ENCODE measurements at regions of chr3 and their contacts with region 1.

Region 1: DNA sequence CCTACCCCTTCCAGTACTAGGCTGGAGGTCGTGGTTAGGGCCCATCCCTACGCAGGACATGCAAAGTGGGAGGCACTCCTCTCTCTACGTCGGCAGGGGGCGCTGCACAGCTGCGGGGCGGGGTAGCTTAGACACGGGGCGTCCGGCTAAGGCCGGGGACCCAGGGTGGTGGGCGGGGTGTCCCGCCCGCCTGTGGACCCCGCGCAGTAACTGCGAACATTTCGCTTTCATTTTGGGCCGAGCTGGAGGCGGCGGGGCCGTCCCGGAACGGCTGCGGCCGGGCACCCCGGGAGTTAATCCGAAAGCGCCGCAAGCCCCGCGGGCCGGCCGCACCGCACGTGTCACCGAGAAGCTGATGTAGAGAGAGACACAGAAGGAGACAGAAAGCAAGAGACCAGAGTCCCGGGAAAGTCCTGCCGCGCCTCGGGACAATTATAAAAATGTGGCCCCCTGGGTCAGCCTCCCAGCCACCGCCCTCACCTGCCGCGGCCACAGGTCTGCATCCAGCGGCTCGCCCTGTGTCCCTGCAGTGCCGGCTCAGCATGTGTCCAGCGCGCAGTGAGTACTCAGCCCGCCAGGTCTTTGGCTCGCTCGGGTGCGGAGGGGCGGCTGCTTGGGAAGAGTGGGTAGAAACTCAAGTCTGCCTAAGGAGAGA is at the start of gene IL12A:
- DNase-seq: peak; percentile 90
- ATAC-seq: peak; percentile 94
- H3K4me3 Mint-ChIP-seq: peak within 1 kb of the TSS; percentile 90
- H3K27ac Mint-ChIP-seq: peak within 1 kb of the TSS; percentile 80
- H3K4me1 Mint-ChIP-seq: peaks cover 53% of the 10 kb centered on the region
- H3K27me3 Mint-ChIP-seq: no peaks in the 10 kb centered on the region
- CTCF ChIP-seq: peak; percentile 90
- total RNA-seq, gene IL12A: 7.0 and 7.8 TPM in 2 replicates

Region 2: GRCh38 chr3:159902546-159903314 is 86.0 kb before region 1 on chr3:
- CTCF ChIA-PET with region 1: interaction called, 3 read pairs
- POLR2A ChIA-PET with region 1: interaction called, 3 read pairs
- intact Hi-C with region 1: loop called (anchors 1 kb)
- DNase-seq: no peak
- ATAC-seq: peak; percentile 59
- H3K4me3 Mint-ChIP-seq: no peak overlapping the region
- H3K27ac Mint-ChIP-seq: peak overlapping the region; percentile 63
- H3K4me1 Mint-ChIP-seq: peaks cover 25% of the 10 kb centered on the region
- H3K27me3 Mint-ChIP-seq: no peaks in the 10 kb centered on the region
- CTCF ChIP-seq: no peak

Region 3: GRCh38 chr3:159977295-159977694 is 11.4 kb before region 1 on chr3:
- CTCF ChIA-PET with region 1: interaction called, 5 read pairs
- POLR2A ChIA-PET with region 1: no interaction called
- intact Hi-C with region 1: loop called (anchors 1 kb)
- DNase-seq: no peak
- ATAC-seq: no peak
- H3K4me3 Mint-ChIP-seq: no peak overlapping the region
- H3K27ac Mint-ChIP-seq: no peak overlapping the region
- H3K4me1 Mint-ChIP-seq: no peaks in the 10 kb centered on the region
- H3K27me3 Mint-ChIP-seq: peaks cover 8% of the 10 kb centered on the region
- CTCF ChIP-seq: no peak

Region 4: DNA sequence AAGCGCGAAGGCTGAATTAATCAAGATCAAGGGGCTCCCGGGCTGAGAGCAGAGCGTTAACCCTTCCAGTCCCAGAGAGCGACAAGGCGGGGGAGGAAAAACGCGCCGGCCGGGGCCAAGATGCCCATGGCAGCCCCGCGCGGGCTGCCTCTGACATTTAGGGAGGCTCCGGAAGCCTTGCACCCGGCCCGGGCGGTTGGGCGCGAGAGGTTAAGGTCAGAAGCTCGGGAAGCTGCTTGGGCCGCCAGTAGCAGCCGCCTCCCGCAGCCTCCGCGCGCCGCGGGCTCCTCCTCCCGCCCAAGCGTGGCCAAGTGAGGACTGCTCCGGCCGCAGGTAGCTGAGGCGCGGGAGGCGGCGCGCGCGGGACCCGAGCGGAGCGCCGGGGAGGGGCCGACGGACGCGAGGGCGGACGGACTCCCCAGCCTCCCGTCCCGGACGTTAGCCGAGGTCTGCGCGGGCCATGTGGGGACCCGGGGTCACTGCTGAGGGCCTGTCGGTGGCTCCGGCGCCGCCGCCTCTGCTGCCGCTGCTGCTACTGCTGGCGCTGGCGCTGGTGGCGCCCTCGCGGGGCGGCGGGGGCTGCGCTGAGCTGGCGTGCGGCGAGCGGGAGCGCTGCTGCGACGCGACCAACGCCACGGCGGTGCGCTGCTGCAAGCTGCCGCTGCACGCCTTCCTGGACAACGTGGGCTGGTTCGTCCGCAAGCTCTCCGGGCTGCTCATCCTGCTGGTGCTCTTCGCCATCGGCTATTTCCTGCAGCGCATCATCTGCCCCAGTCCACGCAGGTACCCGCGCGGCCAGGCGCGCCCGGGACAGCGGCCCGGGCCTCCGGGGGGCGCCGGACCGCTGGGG is 236.7 kb after region 1 on chr3 and contains the start of gene C3orf80:
- CTCF ChIA-PET with region 1: no interaction called
- POLR2A ChIA-PET with region 1: no interaction called
- intact Hi-C with region 1: loop called (anchors 2 kb)
- DNase-seq: peak; percentile 41
- ATAC-seq: peak; percentile 78
- H3K4me3 Mint-ChIP-seq: peak within 1 kb of the TSS; percentile 71
- H3K27ac Mint-ChIP-seq: no peak within 1 kb of the TSS
- H3K4me1 Mint-ChIP-seq: peaks cover 21% of the 10 kb centered on the region
- H3K27me3 Mint-ChIP-seq: peaks cover 37% of the 10 kb centered on the region
- CTCF ChIP-seq: no peak
- total RNA-seq, gene C3orf80: not detected in 2 replicates

Region 5: DNA sequence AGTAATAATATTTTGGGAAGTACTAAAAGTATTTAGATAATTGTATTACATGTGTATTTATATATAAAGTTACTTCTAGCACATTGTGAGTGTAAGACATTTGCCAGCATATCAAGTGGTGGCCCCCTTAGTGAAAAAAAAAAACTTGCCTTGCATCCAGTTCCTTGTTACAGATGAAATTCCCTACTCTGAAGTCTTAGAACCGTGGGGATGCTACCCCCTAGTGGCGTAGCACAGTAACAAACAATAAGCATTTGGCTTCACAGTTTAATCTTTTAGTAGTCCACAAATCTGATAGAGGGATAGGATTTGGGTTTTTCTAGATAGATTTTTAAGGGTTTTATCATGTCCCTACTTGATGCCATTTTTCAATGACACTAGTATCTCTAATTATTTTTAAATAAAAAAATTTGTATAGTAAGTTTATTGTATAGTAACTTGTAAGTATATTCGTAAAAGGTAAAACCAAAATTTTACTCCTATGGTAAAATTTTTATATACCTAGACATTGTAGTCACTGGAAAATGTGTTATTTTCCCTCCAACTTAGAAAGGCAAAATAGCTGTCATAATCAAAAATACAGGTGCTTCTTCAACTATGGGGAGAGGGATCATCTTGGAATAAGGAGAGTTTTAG is 425.0 kb after region 1 on chr3:
- CTCF ChIA-PET with region 1: interaction called, 11 read pairs
- POLR2A ChIA-PET with region 1: no interaction called
- intact Hi-C with region 1: loop called (anchors 1 kb)
- DNase-seq: peak; percentile 19
- ATAC-seq: peak; percentile 90
- H3K4me3 Mint-ChIP-seq: no peak overlapping the region
- H3K27ac Mint-ChIP-seq: no peak overlapping the region
- H3K4me1 Mint-ChIP-seq: peaks cover 1% of the 10 kb centered on the region
- H3K27me3 Mint-ChIP-seq: no peaks in the 10 kb centered on the region
- CTCF ChIP-seq: peak; percentile 98

Region 6: DNA sequence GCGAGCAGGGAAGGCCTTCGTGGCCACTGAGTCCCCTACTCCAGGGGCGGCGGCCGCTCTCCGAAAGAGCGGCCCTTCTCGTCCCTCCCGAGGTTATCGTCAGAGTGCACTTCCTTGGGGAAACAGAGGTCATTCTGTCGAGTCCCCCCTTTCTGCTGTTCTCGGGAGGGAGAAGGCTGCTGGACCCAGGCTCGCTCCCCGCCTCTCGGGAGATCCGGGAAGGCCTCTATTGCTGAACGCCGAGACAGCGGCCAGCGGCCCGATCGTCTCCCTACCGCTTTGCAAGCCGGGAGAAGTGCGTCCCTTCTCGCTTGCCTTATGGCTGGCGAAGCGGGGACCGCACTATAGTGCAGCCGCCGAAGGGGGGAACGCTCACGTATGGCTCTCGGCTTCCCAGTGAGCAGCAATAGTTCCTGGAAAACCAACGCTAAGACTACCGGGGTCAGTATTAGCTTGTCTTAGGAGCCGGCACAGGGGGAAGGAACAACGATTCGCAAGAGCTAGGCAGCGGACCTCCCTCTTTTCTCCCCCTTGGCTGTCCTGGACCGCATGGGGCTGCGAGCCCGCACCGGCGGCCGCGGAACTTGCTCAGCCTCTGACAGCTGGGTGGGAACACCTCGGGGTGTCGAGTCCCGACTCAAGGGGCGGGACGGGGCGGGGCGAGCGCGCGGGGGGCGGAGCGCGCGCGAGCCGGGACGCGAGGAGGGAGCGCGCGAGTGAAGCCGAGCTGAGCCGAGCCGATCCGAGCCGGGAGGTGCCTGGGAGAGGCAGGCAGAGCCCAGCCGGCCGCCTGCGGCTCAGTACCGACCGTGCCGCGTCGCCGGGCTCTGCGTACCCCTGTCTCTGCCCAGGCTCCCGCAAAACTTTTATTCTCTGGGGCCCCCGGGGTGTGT is 766.4 kb after region 1 on chr3:
- CTCF ChIA-PET with region 1: no interaction called
- POLR2A ChIA-PET with region 1: no interaction called
- intact Hi-C with region 1: loop called (anchors 2 kb)
- DNase-seq: peak; percentile 79
- ATAC-seq: peak; percentile 85
- H3K4me3 Mint-ChIP-seq: peak overlapping the region; percentile 92
- H3K27ac Mint-ChIP-seq: peak overlapping the region; percentile 94
- H3K4me1 Mint-ChIP-seq: peaks cover 27% of the 10 kb centered on the region
- H3K27me3 Mint-ChIP-seq: peaks cover 12% of the 10 kb centered on the region
- CTCF ChIP-seq: no peak